CD4-positive, alpha-beta T cell (primary cell): ENCODE measurements at regions of chr3 and their contacts with region 1.

Region 1: GRCh38 chr3:72597756-72598195 is 250.5 kb downstream of the SHQ1 start:
- DNase-seq: no peak
- ATAC-seq: no peak
- H3K4me3 ChIP-seq: no peak overlapping the region
- H3K4me3 Mint-ChIP-seq: no peak overlapping the region
- H3K27ac ChIP-seq: no peak overlapping the region
- H3K27ac Mint-ChIP-seq: no peak overlapping the region
- H3K4me1 ChIP-seq: no peaks in the 10 kb centered on the region
- H3K4me1 Mint-ChIP-seq: no peaks in the 10 kb centered on the region
- H3K27me3 ChIP-seq: no peaks in the 10 kb centered on the region
- H3K27me3 Mint-ChIP-seq: no peaks in the 10 kb centered on the region
- CTCF ChIP-seq: no peak

Region 2: GRCh38 chr3:72625211-72625969 is 27.6 kb after region 1 on chr3:
- CTCF ChIA-PET with region 1: no interaction called
- POLR2A ChIA-PET with region 1: no interaction called
- intact Hi-C with region 1: no loop called
- DNase-seq: peak in 2 of 14 experiments; percentile 66 to 75
- ATAC-seq: no peak
- H3K4me3 ChIP-seq: no peak overlapping the region
- H3K4me3 Mint-ChIP-seq: no peak overlapping the region
- H3K27ac ChIP-seq: no peak overlapping the region
- H3K27ac Mint-ChIP-seq: no peak overlapping the region
- H3K4me1 ChIP-seq: peaks cover 12% of the 10 kb centered on the region
- H3K4me1 Mint-ChIP-seq: peaks cover 10% of the 10 kb centered on the region
- H3K27me3 ChIP-seq: no peaks in the 10 kb centered on the region
- H3K27me3 Mint-ChIP-seq: no peaks in the 10 kb centered on the region
- CTCF ChIP-seq: no peak

Region 3: GRCh38 chr3:72652395-72652794 is 54.6 kb after region 1 on chr3:
- CTCF ChIA-PET with region 1: no interaction called
- POLR2A ChIA-PET with region 1: no interaction called
- intact Hi-C with region 1: loop called in 1 of 2 experiments (anchors 2 kb)
- DNase-seq: no peak
- ATAC-seq: no peak
- H3K4me3 ChIP-seq: no peak overlapping the region
- H3K4me3 Mint-ChIP-seq: no peak overlapping the region
- H3K27ac ChIP-seq: no peak overlapping the region
- H3K27ac Mint-ChIP-seq: no peak overlapping the region
- H3K4me1 ChIP-seq: peaks cover 3% of the 10 kb centered on the region
- H3K4me1 Mint-ChIP-seq: peaks cover 2% of the 10 kb centered on the region
- H3K27me3 ChIP-seq: peaks cover 6 to 7% of the 10 kb centered on the region in 2 experiments
- H3K27me3 Mint-ChIP-seq: peaks cover 4% of the 10 kb centered on the region
- CTCF ChIP-seq: no peak